Activated naive CD4-positive, alpha-beta T cell treated with anti-CD3 and anti-CD28 coated beads for 36 hours (primary cell): ENCODE measurements at regions of chr10 and their contacts with region 1.

Region 1: GRCh38 chr10:7417103-7417623 is 6.3 kb upstream of the SFMBT2 start:
- DNase-seq: no peak
- H3K4me3 Mint-ChIP-seq: no peak overlapping the region
- H3K27ac Mint-ChIP-seq: no peak overlapping the region
- H3K4me1 Mint-ChIP-seq: peaks cover 17% of the 10 kb centered on the region
- H3K27me3 Mint-ChIP-seq: peaks cover 11% of the 10 kb centered on the region

Region 2: GRCh38 chr10:6838118-6838517 is 579.0 kb before region 1 on chr10:
- CTCF ChIA-PET with region 1: no interaction called
- intact Hi-C with region 1: loop called (anchors 2 kb)
- DNase-seq: peak; percentile 18
- H3K4me3 Mint-ChIP-seq: no peak overlapping the region
- H3K27ac Mint-ChIP-seq: no peak overlapping the region
- H3K4me1 Mint-ChIP-seq: peaks cover 4% of the 10 kb centered on the region
- H3K27me3 Mint-ChIP-seq: peaks cover 4% of the 10 kb centered on the region

Region 3: DNA sequence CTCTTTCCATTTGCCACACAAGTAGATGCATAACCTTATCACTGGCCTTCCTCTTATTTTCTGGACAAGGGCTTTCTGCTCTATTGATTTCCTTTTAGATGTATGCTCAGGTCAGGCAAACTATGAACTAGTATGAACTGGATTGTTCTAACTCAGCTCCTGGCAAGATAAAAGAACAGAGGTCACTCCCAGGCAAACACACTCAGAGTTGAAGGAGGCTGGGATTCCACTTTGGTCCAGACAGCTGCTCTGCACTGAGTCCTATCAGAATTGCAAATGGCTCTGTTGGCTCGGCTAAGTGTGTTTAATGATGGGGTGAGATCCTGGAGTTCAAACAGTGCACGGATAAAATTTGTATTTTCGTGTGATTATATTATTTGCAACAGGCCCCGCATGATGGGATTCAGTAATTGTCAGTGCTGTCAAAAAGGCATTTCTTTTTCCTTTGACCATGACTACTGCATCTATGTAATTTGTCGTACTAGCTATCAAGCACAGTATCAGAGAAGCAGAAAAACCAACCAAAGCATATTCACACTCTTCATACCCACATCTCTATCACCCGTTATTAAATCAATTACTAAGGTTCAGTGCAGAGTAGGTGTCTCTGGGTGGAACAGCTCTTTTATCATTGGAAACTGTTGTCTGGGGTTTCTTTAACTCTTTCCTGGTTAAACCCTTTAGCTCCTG is 549.0 kb before region 1 on chr10:
- CTCF ChIA-PET with region 1: no interaction called
- intact Hi-C with region 1: no loop called
- DNase-seq: no peak
- H3K4me3 Mint-ChIP-seq: no peak overlapping the region
- H3K27ac Mint-ChIP-seq: no peak overlapping the region
- H3K4me1 Mint-ChIP-seq: no peaks in the 10 kb centered on the region
- H3K27me3 Mint-ChIP-seq: peaks cover 10% of the 10 kb centered on the region

Region 4: DNA sequence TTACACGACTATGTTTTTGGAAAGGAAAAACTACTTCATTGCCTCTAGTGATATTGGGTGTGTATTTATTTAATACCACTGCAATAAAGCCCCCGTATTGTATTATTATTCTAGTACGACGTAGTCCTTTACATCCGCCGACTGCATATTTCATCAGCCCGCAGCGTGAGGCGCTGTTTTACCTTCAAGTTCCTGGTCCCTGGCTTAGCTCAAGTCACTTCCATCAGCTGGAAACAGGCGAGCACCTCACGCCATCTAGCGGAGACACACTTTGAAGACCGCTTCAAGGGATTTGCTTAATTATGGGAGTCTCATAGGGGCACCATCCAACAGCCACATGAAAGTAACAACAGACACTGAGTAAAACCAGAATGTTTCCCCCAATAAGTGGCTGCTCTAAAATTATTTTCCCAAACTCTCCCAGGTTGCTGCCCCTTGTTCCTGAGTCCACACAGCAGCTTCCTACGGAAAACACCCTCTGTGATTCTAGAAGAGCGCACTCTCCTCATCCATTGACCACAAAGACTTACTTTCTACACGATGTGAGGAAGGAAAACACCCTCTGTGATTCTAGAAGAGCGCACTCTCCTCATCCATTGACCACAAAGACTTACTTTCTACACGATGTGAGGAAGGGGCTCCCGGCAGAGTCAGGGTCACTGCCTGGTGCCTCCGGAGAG is 270.2 kb after region 1 on chr10:
- CTCF ChIA-PET with region 1: no interaction called
- intact Hi-C with region 1: loop called (anchors 5 kb)
- DNase-seq: peak; percentile 92
- H3K4me3 Mint-ChIP-seq: no peak overlapping the region
- H3K27ac Mint-ChIP-seq: no peak overlapping the region
- H3K4me1 Mint-ChIP-seq: peaks cover 10% of the 10 kb centered on the region
- H3K27me3 Mint-ChIP-seq: no peaks in the 10 kb centered on the region